ENCODE measurements at regions of chr11 and their contacts with region 1.

Region 1: DNA sequence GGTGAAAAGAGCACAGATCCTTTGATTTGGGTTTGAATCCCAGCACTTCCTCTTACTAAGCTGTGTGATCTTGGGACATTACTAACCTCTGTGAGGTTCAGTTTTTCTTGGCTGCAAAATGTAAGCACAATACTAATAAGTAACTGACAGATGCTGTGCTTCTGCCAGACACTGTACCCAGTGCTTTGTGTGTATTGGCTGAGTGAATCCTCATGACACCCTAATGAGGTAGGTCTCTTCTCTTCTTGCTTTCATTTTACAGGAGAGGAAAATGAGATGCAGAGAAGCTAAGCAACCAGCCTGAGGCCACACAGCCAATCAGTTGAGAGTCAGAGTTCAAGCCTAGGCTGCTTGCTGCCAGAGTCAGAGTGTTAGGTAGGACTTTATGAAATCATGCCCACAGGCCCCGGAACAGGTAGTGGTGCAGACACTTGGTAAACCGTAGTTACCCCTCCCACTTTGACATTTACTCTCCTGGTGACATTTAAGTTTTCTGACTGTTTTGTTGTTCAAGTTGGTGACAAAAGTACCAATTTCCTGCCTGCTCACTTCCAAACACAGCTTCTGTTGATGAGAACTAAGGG is 21.2 kb downstream of the PTPRJ start:
- DNase-seq: no peak
- ATAC-seq: peak; percentile 27 to 56 (median 44)
- H3K4me3 ChIP-seq: no peak overlapping the region
- H3K27ac ChIP-seq: peak overlapping the region in 3 of 12 donors; percentile 0 to 66 (median 42)
- H3K4me1 ChIP-seq: peaks cover 0 to 93% (median 20%) of the 10 kb centered on the region in 12 donors
- H3K27me3 ChIP-seq: no peaks in the 10 kb centered on the region
- CTCF ChIP-seq: no peak
- POLR2A ChIP-seq: no peak

Region 2: DNA sequence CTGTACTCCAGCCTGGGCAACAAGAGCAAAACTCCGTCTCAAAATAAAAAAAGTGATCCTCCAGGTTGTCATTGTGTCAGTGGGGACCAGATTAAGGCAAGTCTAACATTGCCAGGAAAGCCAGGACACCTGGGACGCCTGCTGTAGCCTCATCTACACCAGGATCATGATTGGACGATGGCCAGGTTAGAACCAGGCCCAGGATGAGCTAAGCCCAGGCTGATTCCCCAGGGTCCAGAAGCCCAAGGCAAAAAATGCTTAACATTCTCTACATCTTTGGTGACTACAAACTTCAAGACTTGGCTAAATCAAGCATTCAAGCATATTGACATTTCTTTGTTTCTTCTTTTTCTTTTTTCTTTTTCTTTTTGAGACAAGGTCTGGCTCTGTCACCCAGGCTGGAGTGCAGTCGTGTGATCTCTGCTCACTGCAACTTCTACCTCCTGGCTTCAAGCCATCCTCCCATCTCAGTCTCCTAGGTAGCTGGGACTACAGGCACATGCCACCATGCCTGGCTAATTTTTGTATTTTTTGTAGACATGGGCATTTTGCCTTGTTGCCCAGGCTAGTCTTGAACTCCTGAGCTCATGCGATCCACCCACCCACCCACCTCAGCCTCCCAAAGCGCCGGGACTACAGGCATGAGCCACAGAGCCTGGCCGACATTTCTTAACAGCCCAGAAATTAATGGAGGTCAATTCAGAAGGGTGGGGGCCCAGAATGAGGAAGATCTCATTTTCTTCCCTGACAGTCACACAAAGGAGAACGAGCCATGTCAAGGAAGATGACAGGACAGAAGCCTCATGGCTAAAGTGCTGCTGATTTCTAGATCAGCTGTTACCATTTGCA is 33.7 kb before region 1 on chr11:
- intact Hi-C with region 1: loop called in 1 of 10 experiments (anchors 5 kb)
- DNase-seq: no peak
- ATAC-seq: no peak
- H3K4me3 ChIP-seq: no peak overlapping the region
- H3K27ac ChIP-seq: no peak overlapping the region
- H3K4me1 ChIP-seq: no peaks in the 10 kb centered on the region
- H3K27me3 ChIP-seq: no peaks in the 10 kb centered on the region
- CTCF ChIP-seq: no peak
- POLR2A ChIP-seq: no peak

Region 3: GRCh38 chr11:48047616-48048015 is 46.1 kb after region 1 on chr11:
- intact Hi-C with region 1: loop called in 1 of 10 experiments (anchors 5 kb)
- DNase-seq: no peak
- ATAC-seq: no peak
- H3K4me3 ChIP-seq: no peak overlapping the region
- H3K27ac ChIP-seq: no peak overlapping the region
- H3K4me1 ChIP-seq: peaks cover 0 to 85% (median 4%) of the 10 kb centered on the region in 12 donors
- H3K27me3 ChIP-seq: no peaks in the 10 kb centered on the region
- CTCF ChIP-seq: no peak
- POLR2A ChIP-seq: no peak